BJ (cell line): ENCODE measurements at regions of chr15 and their contacts with region 1.

Region 1: DNA sequence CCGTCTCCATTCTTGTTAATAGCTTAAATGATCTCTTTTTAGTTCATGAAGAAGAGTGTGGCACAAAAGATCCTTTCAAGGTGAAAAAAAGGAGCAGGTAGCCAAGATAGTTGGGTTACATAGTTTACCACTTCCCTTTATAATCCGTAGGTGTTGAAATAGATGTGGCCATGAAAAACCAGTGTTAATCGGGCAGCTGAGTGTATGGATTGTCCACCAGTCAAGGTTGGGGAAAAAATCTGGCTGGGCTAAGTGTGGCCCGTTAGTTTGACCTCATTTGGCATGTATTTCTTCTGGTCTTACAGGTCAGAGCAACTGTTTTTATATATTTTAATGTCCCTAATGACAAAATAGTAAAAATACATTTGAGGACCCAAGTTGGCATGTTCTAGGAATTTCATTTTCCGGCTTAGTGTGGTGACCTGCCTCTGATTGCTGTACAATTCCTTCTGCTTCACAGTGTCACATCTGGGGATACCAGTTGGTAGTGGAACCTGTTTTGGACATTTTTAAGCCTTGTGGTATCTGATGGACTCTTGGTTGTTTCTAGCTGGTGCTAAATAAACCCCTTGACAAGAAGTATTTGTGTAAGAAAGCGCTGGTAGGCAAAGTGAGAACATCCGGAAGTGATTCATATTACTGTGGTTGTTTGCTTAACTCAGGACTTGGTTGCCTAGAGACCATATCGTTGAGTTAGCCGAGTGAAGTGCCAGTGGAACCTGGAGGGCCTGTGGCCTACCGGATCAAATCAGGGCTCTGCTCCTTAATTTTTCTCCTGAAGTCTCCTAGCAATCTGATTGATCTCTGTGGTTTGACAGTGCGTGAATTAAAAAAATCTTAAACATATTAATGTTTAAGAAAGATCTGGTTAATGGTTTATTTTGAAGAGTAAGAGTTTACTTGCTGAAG is 12.6 kb downstream of the IQGAP1 start:
- DNase-seq: peak; percentile 83
- H3K4me3 ChIP-seq: no peak overlapping the region
- H3K27me3 ChIP-seq: no peaks in the 10 kb centered on the region
- CTCF ChIP-seq: no peak

Region 2: DNA sequence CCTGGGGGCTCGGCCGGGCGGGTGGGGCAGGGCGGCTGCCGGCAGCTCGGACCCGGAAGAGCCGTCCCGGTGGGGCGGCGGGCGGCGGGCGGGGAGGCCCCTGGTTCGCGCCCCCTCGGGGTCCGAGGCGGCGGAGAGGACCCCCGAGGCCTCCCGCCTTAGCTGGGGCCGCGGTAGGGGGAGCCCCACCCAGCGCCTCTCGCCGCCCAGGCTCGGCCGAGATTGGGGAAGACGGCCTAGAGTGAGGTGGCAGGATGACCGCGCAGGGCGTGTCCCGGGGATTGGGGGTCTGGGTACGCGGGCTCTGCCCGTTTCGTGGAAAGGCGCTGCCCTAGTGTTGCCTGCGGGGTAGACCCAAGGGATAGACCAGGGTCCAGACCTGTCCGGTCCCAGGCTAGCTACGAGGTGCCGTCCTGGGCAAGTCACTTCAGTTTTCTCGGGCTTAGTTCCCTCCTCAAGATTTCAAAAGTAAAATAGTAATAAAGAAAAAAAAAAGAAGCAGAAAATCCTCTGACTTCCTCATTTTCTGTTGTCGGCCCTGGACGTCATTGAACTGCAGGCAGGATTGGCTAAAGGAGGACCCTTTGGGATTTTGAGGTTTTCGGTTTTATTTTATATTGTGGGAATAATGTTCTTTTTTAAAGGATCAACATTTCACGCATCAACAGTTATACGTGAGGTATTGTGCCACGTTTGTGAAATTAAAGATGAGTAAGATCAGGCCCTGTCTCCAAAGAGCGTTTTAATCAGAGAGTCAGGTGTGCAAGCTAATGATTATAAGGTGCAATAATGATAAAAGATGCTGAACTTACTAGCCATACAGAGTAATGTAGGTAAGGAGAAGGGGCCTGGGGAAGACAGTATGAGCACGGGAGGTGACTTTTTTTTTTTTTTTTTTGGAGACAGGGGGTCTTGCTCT is 11.9 kb before region 1 on chr15:
- CTCF ChIA-PET with region 1: interaction called, 4 read pairs
- POLR2A ChIA-PET with region 1: interaction called, 16 read pairs
- DNase-seq: no peak
- H3K4me3 ChIP-seq: peak overlapping the region; percentile 87
- H3K27me3 ChIP-seq: no peaks in the 10 kb centered on the region
- CTCF ChIP-seq: 0 out of 2 replicates have a peak, but pooled peaks have one; percentile 4